Activated CD4-positive, alpha-beta T cell treated with anti-CD3 and anti-CD28 coated beads, Interleukin-2, amount 10 ng/mL, durations not matched to agents 24 days and 14 days (primary cell): ENCODE measurements at regions of chrX and their contacts with region 1.

Region 1: GRCh38 chrX:21438792-21439191 is 64.6 kb downstream of the CNKSR2 start:
- DNase-seq: no peak
- H3K4me3 Mint-ChIP-seq: peak overlapping the region; percentile 74
- H3K27ac Mint-ChIP-seq: peak overlapping the region; percentile 85
- H3K4me1 Mint-ChIP-seq: peaks cover 5% of the 10 kb centered on the region
- H3K27me3 Mint-ChIP-seq: no peaks in the 10 kb centered on the region

Region 2: DNA sequence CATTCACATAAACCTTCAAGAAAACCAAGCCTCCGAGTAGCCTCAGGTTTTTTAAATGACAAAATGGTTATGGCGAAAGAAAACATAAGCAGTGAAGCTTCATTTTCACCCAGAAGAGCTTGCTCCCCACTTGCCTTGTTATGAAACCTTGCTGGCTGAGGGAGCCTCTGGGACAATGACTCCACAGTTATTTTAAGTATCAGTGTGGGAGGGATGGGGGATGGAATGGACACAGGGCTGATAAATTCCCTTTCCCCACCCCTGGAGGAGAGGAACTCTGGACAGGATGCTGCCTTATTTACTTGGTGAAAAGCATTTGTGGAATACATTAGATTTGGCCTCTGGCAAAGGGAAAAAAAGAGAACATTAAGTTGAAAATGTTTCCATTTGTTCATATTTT is 285.3 kb before region 1 on chrX:
- intact Hi-C with region 1: no loop called
- DNase-seq: no peak
- H3K4me3 Mint-ChIP-seq: no peak overlapping the region
- H3K27ac Mint-ChIP-seq: no peak overlapping the region
- H3K4me1 Mint-ChIP-seq: no peaks in the 10 kb centered on the region
- H3K27me3 Mint-ChIP-seq: no peaks in the 10 kb centered on the region

Region 3: DNA sequence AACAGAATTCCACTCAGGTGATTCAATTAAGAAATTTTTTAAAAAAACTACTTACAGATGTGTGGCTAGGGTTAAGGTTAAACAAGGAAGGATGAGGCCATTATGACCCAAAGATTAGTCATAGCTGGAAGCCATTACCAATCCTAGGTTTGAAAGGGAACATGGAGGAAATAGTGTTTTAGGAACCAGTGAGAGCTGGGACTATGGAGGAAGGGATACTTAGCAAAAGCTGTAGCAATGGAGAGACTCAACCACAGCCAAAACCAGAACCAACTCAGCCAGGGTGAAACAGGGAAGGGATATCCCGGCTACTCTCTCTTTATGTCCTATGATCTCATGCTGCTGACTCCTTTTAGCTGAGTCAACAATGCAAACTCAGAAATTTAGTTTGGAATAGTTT is 213.1 kb before region 1 on chrX:
- intact Hi-C with region 1: no loop called
- DNase-seq: no peak
- H3K4me3 Mint-ChIP-seq: no peak overlapping the region
- H3K27ac Mint-ChIP-seq: no peak overlapping the region
- H3K4me1 Mint-ChIP-seq: no peaks in the 10 kb centered on the region
- H3K27me3 Mint-ChIP-seq: no peaks in the 10 kb centered on the region

Region 4: DNA sequence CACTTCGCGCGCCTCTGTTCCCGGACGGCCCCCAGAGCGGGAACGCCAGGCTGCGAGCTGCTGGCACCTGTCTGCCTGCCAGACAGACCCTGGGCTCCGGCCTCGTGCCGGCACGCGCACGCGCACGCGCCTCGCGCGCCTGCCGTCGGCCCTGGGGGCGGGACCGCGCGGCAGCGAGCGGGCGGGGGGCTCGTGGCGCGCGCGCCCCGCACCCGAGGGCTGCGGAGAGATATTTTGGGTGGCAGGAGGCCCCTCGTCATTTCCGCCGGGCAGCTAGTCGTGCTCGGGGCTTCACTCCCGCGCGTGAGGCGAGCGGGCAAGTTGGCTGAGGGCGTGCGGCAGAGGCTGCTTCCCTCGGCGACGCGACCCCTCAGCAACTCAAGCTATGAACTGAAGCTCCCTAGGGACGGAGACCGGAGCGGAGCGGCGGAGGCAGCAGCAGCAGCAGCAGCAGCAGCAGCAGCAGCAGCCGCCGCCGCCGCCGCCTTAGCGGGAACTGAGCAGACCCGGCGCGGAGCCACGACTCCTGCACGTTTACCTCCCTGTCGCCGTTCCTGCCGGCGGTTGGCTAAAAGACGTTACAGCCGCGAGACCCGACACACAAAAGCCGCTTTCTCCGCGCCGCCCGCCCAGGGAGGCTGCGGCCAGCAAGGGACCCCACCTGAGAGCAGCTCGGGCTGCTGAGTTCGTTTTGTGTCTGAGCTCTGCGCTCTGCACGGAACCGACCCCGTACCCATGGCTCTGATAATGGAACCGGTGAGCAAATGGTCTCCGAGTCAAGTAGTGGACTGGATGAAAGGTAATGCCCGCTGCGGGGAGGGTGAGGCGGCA is 64.4 kb before region 1 on chrX and contains the start of gene CNKSR2:
- intact Hi-C with region 1: loop called (anchors 10 kb)
- DNase-seq: peak; percentile 90
- H3K4me3 Mint-ChIP-seq: peak within 1 kb of the TSS; percentile 94
- H3K27ac Mint-ChIP-seq: peak within 1 kb of the TSS; percentile 83
- H3K4me1 Mint-ChIP-seq: peaks cover 13% of the 10 kb centered on the region
- H3K27me3 Mint-ChIP-seq: peaks cover 5% of the 10 kb centered on the region
- total RNA-seq, gene CNKSR2: 7.1 and 10.2 TPM in 2 replicates